Adrenal gland (tissue), 19 donors: ENCODE measurements at regions of chr20 and their contacts with region 1.

Region 1: GRCh38 chr20:32894026-32894483 is 35.3 kb downstream of the EFCAB8 start:
- DNase-seq: peak in 3 of 7 donors; percentile 17 to 28 (median 26)
- H3K4me3 ChIP-seq: no peak overlapping the region
- H3K27ac ChIP-seq: no peak overlapping the region
- H3K4me1 ChIP-seq: no peaks in the 10 kb centered on the region
- H3K27me3 ChIP-seq: no peaks in the 10 kb centered on the region
- CTCF ChIP-seq: peak in 5 of 6 experiments; percentile 11 to 41 (median 30)
- POLR2A ChIP-seq: no peak

Region 2: GRCh38 chr20:32789896-32790750 is 103.9 kb before region 1 on chr20:
- intact Hi-C with region 1: loop called in 1 of 2 experiments (anchors 10 kb)
- DNase-seq: peak; percentile 74 to 87 (median 79)
- H3K4me3 ChIP-seq: no peak overlapping the region
- H3K27ac ChIP-seq: no peak overlapping the region
- H3K4me1 ChIP-seq: no peaks in the 10 kb centered on the region
- H3K27me3 ChIP-seq: no peaks in the 10 kb centered on the region
- CTCF ChIP-seq: peak; percentile 94 to 99 (median 96)
- POLR2A ChIP-seq: no peak